PC-3 (cell line): ENCODE measurements at regions of chr9 and their contacts with region 1.

Region 1: DNA sequence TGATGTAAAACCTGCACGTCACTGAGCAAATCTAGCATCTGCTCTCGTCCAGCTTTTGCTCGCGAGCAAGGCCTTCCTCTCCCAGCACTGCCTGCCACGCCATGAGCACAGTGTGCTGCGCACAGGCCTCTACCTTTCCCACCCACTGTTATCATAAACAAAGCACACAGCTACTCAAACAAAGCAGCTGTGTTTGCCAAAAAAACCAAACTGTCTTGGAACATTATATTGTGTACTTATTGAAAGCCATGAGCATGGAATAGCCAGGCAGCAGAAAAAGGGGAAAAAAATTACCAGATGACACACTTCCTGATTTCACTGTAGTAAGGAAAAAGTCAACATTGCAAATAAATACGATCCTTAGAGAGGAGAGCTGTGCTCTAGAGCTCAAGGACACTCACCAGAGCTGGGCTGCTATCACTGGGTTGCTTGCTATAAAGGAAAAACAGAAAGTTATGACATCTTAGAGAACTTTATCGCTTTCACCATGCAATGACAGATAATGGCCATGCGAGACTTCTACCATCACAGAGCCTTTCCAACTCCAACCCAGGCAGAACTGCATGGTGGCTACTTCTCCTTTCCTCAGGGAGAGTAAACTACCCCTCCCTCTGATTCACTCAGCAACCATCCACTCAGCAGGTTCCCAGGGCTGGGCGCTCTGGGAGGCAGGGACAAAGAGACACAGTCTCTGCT is 69.6 kb downstream of the EPB41L4B start:
- DNase-seq: peak; percentile 94
- ATAC-seq: peak; percentile 75
- H3K4me3 ChIP-seq: peak overlapping the region; percentile 51
- H3K27ac ChIP-seq: peak overlapping the region; percentile 100
- H3K4me1 ChIP-seq: peaks cover 60% of the 10 kb centered on the region
- H3K27me3 ChIP-seq: no peaks in the 10 kb centered on the region
- CTCF ChIP-seq: no peak

Region 2: GRCh38 chr9:109182940-109183798 is 68.1 kb before region 1 on chr9:
- CTCF ChIA-PET with region 1: interaction called, 3 read pairs
- POLR2A ChIA-PET with region 1: interaction called, 4 read pairs
- intact Hi-C with region 1: loop called (anchors 10 kb)
- DNase-seq: peak; percentile 55
- ATAC-seq: peak; percentile 94
- H3K4me3 ChIP-seq: no peak overlapping the region
- H3K27ac ChIP-seq: no peak overlapping the region
- H3K4me1 ChIP-seq: no peaks in the 10 kb centered on the region
- H3K27me3 ChIP-seq: no peaks in the 10 kb centered on the region
- CTCF ChIP-seq: peak; percentile 63

Region 3: GRCh38 chr9:109297899-109298298 is 46.7 kb after region 1 on chr9:
- CTCF ChIA-PET with region 1: no interaction called
- POLR2A ChIA-PET with region 1: no interaction called
- intact Hi-C with region 1: loop called (anchors 5 kb)
- DNase-seq: peak; percentile 84
- ATAC-seq: peak; percentile 85
- H3K4me3 ChIP-seq: no peak overlapping the region
- H3K27ac ChIP-seq: peak overlapping the region; percentile 46
- H3K4me1 ChIP-seq: peaks cover 13% of the 10 kb centered on the region
- H3K27me3 ChIP-seq: no peaks in the 10 kb centered on the region
- CTCF ChIP-seq: no peak

Region 4: GRCh38 chr9:109401168-109401989 is 150.2 kb after region 1 on chr9:
- CTCF ChIA-PET with region 1: no interaction called
- POLR2A ChIA-PET with region 1: no interaction called
- intact Hi-C with region 1: no loop called
- DNase-seq: peak; percentile 80
- ATAC-seq: peak; percentile 91
- H3K4me3 ChIP-seq: no peak overlapping the region
- H3K27ac ChIP-seq: no peak overlapping the region
- H3K4me1 ChIP-seq: no peaks in the 10 kb centered on the region
- H3K27me3 ChIP-seq: no peaks in the 10 kb centered on the region
- CTCF ChIP-seq: peak; percentile 89